Right cardiac atrium (tissue), 5 donors: ENCODE measurements at regions of chr12 and their contacts with region 1.

Region 1: DNA sequence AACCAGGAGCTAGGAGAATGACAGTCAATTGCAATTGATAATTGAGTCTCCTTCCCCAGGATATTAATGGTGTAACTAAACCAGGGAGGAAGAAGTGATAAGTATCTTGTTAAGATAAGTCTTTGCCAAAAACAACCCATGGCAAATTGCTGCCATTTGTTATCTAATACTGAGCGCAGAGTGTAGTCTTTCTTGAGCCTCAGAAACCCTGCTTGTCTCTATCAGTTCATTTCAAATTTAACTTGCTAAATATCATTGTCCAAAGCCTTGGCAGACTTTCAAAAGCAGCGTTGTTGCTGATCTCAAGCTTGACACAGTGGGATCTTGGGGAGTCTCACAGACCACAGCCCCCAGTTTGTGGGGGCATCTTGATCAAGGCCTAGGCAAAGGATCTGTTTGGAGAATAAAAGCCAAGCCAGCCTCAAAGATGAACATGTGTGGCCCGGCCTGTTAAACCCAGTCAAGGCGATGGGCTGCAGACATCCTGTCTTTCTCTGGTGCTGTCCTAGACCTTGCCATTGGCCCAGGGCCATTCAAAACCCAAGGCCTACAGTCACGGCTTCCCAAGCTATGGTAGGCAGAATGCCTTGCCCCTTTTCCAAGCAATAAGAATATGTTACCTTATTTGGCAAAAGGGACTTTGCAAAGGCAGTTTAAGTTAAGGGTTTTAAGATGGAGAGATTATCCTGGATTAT is 164.2 kb downstream of the CHST11 start:
- DNase-seq: no peak
- ATAC-seq: peak; percentile 36 to 51
- H3K4me3 ChIP-seq: no peak overlapping the region
- H3K27ac ChIP-seq: no peak overlapping the region
- H3K4me1 ChIP-seq: peaks cover 3% of the 10 kb centered on the region
- H3K27me3 ChIP-seq: no peaks in the 10 kb centered on the region

Region 2: GRCh38 chr12:104852102-104852501 is 231.1 kb after region 1 on chr12:
- intact Hi-C with region 1: loop called in 1 of 4 experiments (anchors 5 kb)
- DNase-seq: no peak
- ATAC-seq: no peak
- H3K4me3 ChIP-seq: no peak overlapping the region
- H3K27ac ChIP-seq: no peak overlapping the region
- H3K4me1 ChIP-seq: peaks cover 1% of the 10 kb centered on the region
- H3K27me3 ChIP-seq: no peaks in the 10 kb centered on the region